Colonic mucosa (tissue), 4 donors: ENCODE measurements at regions of chr3 and their contacts with region 1.

Region 1: DNA sequence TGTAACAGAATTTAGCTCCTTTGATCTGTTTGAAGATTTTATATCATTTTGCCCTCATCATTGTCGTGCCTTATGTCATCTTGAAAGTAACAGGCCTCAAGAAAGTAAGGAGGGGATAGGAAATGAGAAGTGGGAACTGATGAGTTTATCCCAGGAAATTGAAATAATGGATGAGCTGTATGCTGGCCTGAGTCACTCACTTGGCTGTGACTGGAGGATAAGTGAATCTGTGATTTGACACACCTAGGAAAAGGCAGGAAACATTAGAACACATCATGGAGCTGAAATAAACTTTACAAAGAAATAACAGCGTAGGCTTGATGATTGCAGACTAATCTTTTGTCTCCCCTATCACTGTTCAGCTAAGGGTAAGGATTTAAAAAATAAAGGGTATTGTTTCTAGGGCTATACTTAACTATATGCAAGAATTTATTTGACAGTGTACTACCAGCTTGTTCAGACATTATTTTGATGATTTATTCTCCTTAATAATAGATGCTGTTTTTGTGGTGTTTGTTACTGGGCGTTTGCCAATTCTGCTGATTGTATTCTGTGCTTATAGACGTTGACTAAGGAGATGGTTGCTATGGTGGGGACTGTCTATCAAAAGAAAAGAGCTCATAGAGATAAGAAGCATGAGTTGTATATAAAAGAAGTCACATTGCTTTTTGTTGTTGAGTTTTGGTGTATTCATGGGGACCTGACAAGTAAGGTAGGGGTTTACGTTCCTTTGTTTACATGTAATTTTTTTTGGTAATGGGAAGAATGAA is 105.6 kb upstream of the ROPN1 start:
- DNase-seq: no peak
- H3K4me3 ChIP-seq: no peak overlapping the region
- H3K27ac ChIP-seq: no peak overlapping the region
- H3K4me1 ChIP-seq: no peaks in the 10 kb centered on the region
- H3K27me3 ChIP-seq: no peaks in the 10 kb centered on the region
- CTCF ChIP-seq: no peak

Region 2: DNA sequence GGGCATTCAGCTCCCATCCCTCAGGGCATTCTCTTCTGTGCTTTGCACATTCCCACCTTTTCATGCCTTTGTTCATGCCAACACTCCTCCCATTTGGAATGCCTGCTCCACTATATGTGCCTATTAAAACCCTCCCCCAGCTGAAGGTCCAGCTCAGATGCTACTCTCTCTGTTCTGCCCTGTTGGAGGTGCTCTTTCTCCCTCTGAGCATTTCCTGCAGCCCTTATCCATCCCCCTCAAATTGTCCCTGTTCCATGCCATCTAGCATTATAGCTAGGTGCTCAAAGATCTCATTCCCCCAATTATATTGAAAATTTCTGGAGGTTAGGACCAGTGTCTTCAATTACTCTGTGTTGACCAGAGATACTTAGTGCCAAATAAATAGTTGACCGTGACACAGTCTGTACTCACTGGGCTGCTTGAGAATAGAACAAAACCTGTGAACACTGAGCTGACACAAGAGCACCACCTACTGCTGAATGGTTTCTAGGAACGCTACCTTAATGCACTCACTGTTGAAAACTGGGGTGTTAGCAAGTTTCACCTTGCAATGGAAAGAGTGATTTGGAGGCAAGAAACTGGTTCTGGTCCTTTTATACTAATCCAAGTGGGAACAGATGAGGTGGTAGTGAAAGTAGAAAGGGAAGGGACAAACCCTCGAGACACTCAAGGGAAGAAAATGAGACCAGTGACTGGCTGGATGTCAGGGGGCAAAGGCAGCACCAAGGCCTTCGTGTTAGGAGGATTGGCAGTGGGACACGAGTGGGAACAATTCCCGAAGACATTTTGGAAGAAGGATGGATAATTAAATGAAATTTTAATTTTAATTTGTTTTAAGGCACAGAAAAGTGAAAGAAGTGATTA is 184.1 kb after region 1 on chr3:
- intact Hi-C with region 1: loop called (anchors 10 kb)
- DNase-seq: peak; percentile 40
- H3K4me3 ChIP-seq: no peak overlapping the region
- H3K27ac ChIP-seq: no peak overlapping the region
- H3K4me1 ChIP-seq: peaks cover 3% of the 10 kb centered on the region
- H3K27me3 ChIP-seq: no peaks in the 10 kb centered on the region
- CTCF ChIP-seq: peak; percentile 36

Region 3: DNA sequence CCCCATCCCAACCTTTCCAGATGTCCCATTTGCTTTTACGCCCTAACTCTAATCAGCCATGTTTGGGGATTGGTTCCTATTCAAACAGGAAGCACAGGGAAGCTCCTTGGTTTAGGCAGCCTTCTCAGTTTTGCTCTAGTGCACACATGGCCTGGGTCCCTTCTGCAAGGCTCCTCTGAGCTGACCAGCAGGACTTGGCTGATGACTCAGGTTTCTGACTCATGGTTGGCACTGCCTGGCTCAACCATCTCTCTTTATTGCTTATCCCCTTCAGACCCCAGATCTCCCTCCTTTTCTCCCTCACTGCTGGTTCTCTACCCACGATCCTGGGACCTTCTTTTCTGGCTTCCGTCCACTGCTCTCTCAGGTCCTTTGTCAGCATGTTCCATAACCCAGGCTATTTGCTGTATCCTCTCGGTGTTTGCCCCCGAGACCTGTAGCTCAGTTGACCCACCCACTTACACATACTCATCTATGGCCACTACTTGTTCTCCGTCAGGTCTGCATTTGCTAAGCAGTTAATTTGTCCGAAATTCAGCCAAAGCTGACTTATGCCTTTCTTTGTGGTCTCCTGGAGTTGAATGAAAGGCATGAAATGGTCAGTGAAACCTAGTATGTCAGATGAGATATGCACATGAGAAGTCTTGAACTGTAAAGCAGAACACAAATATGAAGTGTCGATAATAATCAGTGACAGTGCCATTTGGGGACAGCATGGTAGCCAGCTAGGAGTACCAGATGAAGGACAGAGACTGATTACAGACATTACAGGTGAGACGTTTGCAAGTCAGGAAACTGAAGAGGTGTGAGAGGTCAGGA is 217.9 kb after region 1 on chr3:
- intact Hi-C with region 1: no loop called
- DNase-seq: no peak
- H3K4me3 ChIP-seq: no peak overlapping the region
- H3K27ac ChIP-seq: no peak overlapping the region
- H3K4me1 ChIP-seq: no peaks in the 10 kb centered on the region
- H3K27me3 ChIP-seq: no peaks in the 10 kb centered on the region
- CTCF ChIP-seq: no peak